CD4-positive, alpha-beta T cell (primary cell): ENCODE measurements at regions of chr1 and their contacts with region 1.

Region 1: DNA sequence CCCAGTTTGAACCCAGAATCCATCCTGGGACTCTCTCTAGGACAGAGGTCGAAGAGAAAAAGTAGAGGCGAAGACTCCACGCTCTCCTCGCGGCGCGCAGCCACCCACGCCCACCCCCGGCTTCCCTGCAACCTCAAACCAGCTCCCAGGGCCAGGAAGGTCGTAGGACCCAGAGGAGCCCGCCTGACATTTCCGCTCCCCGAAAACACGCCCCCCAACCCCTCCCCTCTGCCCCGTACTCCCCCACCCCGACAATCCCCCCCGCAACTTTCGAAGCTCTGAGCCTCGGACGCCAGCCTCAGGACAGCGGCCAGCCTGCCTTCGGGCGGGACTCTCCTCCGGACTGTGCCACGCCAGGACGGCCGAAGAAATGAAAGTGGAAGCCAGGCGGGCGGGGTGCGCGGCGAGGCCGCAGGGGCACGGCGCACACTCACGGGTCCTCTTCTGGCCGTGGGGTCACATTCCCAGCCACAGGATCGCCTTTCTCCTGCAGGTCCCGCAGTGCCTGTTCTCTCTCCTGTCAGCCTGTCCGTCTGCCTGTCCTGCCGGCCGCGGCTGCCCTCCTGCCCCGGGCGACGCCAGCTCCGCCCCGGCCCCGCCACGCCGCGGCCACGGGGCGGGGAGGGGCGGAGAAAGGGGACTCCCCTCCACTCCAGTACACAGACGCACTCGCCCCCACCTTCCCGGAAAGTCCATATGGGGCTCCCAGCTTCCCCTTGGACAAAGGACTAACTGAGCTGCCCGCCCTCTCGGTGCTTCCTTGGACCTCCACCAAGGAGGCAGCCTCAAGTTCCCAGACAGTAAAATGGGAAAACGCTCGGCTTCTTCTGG is at the start of gene MOB3C:
- DNase-seq: peak; percentile 39 to 80 (median 61)
- ATAC-seq: peak; percentile 84
- H3K4me3 ChIP-seq: peak within 1 kb of the TSS; percentile 94
- H3K4me3 Mint-ChIP-seq: peak within 1 kb of the TSS; percentile 96
- H3K27ac ChIP-seq: peak within 1 kb of the TSS; percentile 48 to 84
- H3K27ac Mint-ChIP-seq: peak within 1 kb of the TSS; percentile 90
- H3K4me1 ChIP-seq: peaks cover 57% of the 10 kb centered on the region
- H3K4me1 Mint-ChIP-seq: peaks cover 49% of the 10 kb centered on the region
- H3K27me3 ChIP-seq: no peaks in the 10 kb centered on the region
- H3K27me3 Mint-ChIP-seq: no peaks in the 10 kb centered on the region
- CTCF ChIP-seq: no peak
- total RNA-seq, gene MOB3C: 6.7 to 7.8 TPM

Region 2: DNA sequence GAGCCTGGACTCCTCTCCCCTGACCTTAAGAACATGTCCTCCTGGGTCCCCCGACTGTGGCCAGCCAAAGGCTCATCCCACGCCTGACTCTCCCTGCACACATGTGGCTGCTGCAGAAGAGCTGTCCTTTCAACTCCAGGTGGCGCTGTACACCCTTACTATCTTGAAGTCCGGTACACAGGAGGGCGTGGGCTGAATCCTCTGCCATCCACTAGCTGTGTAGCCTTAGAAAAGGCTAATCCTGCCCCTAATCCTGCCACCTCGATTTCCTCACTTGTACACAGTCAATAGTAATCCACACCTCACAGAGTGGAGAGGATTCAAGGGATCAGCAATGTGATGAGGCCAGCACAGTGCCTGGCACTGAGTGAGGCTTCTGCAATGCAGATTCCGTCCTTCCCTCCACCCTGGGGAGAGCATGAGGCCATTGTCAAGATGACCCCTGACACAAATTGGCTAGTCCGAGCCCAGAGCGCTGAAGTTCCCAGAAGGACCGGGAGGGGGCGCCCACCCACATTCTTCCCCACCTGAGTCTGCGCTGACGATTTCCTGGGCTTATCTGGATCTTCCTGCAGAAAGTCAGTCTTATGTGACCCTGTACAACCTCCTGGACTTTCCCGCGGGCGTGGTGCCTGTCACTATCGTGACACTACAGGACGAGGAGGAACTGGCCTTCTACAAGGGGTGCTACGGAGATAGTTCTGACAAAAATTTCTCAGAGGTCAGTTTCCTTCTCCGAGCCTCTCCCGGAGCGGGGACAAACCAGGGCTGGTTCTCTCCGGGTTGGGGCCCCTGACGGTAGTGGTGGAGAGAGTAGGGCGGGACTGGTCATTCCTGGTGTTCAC is 174.0 kb before region 1 on chr1:
- CTCF ChIA-PET with region 1: no interaction called
- POLR2A ChIA-PET with region 1: no interaction called
- intact Hi-C with region 1: no loop called
- DNase-seq: peak; percentile 47 to 80 (median 62)
- ATAC-seq: peak; percentile 79
- H3K4me3 ChIP-seq: peak overlapping the region; percentile 49
- H3K4me3 Mint-ChIP-seq: peak overlapping the region; percentile 87
- H3K27ac ChIP-seq: no peak overlapping the region
- H3K27ac Mint-ChIP-seq: no peak overlapping the region
- H3K4me1 ChIP-seq: peaks cover 21% of the 10 kb centered on the region
- H3K4me1 Mint-ChIP-seq: peaks cover 20% of the 10 kb centered on the region
- H3K27me3 ChIP-seq: peaks cover 9 to 18% of the 10 kb centered on the region in 2 experiments
- H3K27me3 Mint-ChIP-seq: peaks cover 26% of the 10 kb centered on the region
- CTCF ChIP-seq: peak; percentile 92

Region 3: GRCh38 chr1:46587069-46587468 is 29.4 kb before region 1 on chr1:
- CTCF ChIA-PET with region 1: no interaction called
- POLR2A ChIA-PET with region 1: no interaction called
- intact Hi-C with region 1: no loop called
- DNase-seq: peak in 1 of 14 experiments; percentile 17
- ATAC-seq: no peak
- H3K4me3 ChIP-seq: no peak overlapping the region
- H3K4me3 Mint-ChIP-seq: no peak overlapping the region
- H3K27ac ChIP-seq: no peak overlapping the region
- H3K27ac Mint-ChIP-seq: no peak overlapping the region
- H3K4me1 ChIP-seq: peaks cover 11% of the 10 kb centered on the region
- H3K4me1 Mint-ChIP-seq: peaks cover 14% of the 10 kb centered on the region
- H3K27me3 ChIP-seq: no peaks in the 10 kb centered on the region
- H3K27me3 Mint-ChIP-seq: no peaks in the 10 kb centered on the region
- CTCF ChIP-seq: no peak

Region 4: DNA sequence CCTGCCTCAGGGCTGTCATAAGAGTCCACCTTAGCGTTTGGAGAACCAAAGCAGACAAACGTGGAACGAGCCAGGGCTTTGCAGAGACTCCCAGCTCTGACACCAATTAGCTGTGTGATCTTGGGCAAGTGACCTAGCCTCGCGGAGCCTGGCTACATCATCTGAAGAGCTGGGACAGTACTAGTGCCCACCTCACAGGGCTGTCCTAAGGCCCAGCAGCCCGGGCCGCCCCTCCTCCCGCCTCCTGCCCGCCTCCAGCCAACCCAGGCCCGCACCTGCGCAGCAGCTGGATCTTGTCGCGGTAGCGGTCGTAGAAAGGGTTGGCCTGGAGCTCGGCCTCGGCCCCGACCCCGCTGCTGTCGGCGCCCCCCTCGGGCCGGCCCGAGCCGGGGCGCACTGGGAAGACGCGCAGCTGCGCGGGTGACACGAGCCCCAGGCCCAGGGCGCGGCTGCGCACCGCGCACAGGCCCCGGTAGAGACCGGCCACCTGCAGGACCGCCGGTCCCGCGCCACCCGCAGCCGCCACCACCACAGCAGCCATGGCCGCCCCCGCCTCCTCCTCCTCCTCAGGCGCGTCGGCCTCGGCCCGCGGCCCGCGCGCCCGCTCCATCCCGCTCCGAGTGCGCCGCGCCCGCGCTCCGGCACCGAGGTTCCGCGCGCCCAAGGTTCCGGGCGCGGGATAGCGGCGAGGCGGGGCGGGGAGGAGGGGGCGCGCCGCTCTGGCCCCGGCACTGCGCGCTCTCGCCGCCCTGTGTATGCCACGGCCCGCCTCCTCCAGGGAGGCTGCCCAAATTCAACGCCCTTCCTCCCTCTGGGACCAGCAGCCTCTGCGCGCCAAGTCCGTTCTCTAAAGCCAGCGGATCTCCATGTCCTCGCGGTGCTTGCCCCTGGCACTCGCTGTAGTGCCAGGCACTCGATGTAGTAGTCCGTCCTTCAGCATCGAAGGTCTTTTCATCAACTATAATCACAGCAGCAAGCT is 51.6 kb after region 1 on chr1 and contains the start of gene ATPAF1:
- CTCF ChIA-PET with region 1: no interaction called
- POLR2A ChIA-PET with region 1: interaction called, 15 read pairs
- intact Hi-C with region 1: loop called in 1 of 2 experiments (anchors 5 kb)
- DNase-seq: peak; percentile 31 to 83 (median 54)
- ATAC-seq: peak; percentile 87
- H3K4me3 ChIP-seq: peak within 1 kb of the TSS; percentile 81
- H3K4me3 Mint-ChIP-seq: peak within 1 kb of the TSS; percentile 87
- H3K27ac ChIP-seq: peak within 1 kb of the TSS; percentile 7 to 68
- H3K27ac Mint-ChIP-seq: peak within 1 kb of the TSS; percentile 69
- H3K4me1 ChIP-seq: peaks cover 22% of the 10 kb centered on the region
- H3K4me1 Mint-ChIP-seq: peaks cover 16% of the 10 kb centered on the region
- H3K27me3 ChIP-seq: no peaks in the 10 kb centered on the region
- H3K27me3 Mint-ChIP-seq: no peaks in the 10 kb centered on the region
- CTCF ChIP-seq: no peak
- total RNA-seq, gene ATPAF1: 10.1 to 12.4 TPM

Region 5: GRCh38 chr1:46757241-46757959 is 140.9 kb after region 1 on chr1:
- CTCF ChIA-PET with region 1: no interaction called
- POLR2A ChIA-PET with region 1: no interaction called
- intact Hi-C with region 1: no loop called
- DNase-seq: no peak
- ATAC-seq: no peak
- H3K4me3 ChIP-seq: no peak overlapping the region
- H3K4me3 Mint-ChIP-seq: no peak overlapping the region
- H3K27ac ChIP-seq: no peak overlapping the region
- H3K27ac Mint-ChIP-seq: no peak overlapping the region
- H3K4me1 ChIP-seq: no peaks in the 10 kb centered on the region
- H3K4me1 Mint-ChIP-seq: no peaks in the 10 kb centered on the region
- H3K27me3 ChIP-seq: peaks cover 0 to 10% of the 10 kb centered on the region in 2 experiments
- H3K27me3 Mint-ChIP-seq: peaks cover 66% of the 10 kb centered on the region
- CTCF ChIP-seq: no peak